AG04449 (cell line): ENCODE measurements at regions of chr1 and their contacts with region 1.

Region 1: GRCh38 chr1:200139661-200140250 is 112.2 kb downstream of the NR5A2 start:
- DNase-seq: peak; percentile 26
- H3K4me3 ChIP-seq: no peak overlapping the region
- CTCF ChIP-seq: peak; percentile 72

Region 2: GRCh38 chr1:200161817-200162216 is 22.1 kb after region 1 on chr1:
- CTCF ChIA-PET with region 1: interaction called, 14 read pairs
- POLR2A ChIA-PET with region 1: no interaction called
- DNase-seq: no peak
- H3K4me3 ChIP-seq: no peak overlapping the region
- CTCF ChIP-seq: no peak